ENCODE measurements at regions of chr18 and their contacts with region 1.

Region 1: GRCh38 chr18:56563568-56563967 is 74.8 kb downstream of the TXNL1 start:
- DNase-seq: no peak
- H3K4me3 ChIP-seq: no peak overlapping the region
- H3K4me3 Mint-ChIP-seq: no peak overlapping the region
- H3K27ac ChIP-seq: no peak overlapping the region
- H3K27ac Mint-ChIP-seq: peak overlapping the region in 3 of 7 donors; percentile 46 to 52 (median 50)
- H3K4me1 ChIP-seq: peaks cover 34 to 39% of the 10 kb centered on the region in 2 donors
- H3K4me1 Mint-ChIP-seq: peaks cover 30% of the 10 kb centered on the region
- H3K27me3 ChIP-seq: no peaks in the 10 kb centered on the region
- H3K27me3 Mint-ChIP-seq: peaks cover 0 to 7% (median 0%) of the 10 kb centered on the region in 3 donors
- CTCF ChIP-seq: no peak

Region 2: DNA sequence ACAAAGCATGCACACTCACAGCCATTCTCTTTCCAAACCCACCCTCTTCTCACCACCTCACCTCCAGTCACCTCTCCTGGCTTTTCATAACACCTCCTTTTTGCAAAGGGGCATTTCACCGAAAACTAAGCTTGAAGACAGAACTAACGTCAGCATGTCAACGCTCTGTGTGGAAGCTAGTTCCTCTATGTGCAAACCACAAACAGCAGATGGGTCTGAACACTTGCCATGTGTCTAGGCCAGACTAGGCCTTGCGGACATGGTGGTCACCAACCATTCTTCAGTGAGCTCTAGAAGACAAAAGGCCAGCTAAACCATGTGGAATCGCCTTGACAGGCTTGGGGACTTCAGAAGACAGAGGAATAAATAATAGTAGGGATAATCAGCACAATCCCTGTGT is 73.7 kb before region 1 on chr18:
- intact Hi-C with region 1: loop called in 1 of 2 experiments (anchors 10 kb)
- DNase-seq: peak; percentile 13 to 29 (median 23)
- H3K4me3 ChIP-seq: no peak overlapping the region
- H3K4me3 Mint-ChIP-seq: no peak overlapping the region
- H3K27ac ChIP-seq: peak overlapping the region in 1 of 2 donors; percentile 42
- H3K27ac Mint-ChIP-seq: no peak overlapping the region
- H3K4me1 ChIP-seq: peaks cover 27 to 31% of the 10 kb centered on the region in 2 donors
- H3K4me1 Mint-ChIP-seq: peaks cover 17% of the 10 kb centered on the region
- H3K27me3 ChIP-seq: no peaks in the 10 kb centered on the region
- H3K27me3 Mint-ChIP-seq: peaks cover 0 to 3% (median 0%) of the 10 kb centered on the region in 3 donors
- CTCF ChIP-seq: no peak

Measured in CD14-positive monocyte (primary cell).